Activated CD8-positive, alpha-beta memory T cell treated with anti-CD3 and anti-CD28 coated beads, Interleukin-2, amount 10 ng/mL, durations not matched to agents 7 days and 5 days (primary cell): ENCODE measurements at regions of chr16 and their contacts with region 1.

Region 1: DNA sequence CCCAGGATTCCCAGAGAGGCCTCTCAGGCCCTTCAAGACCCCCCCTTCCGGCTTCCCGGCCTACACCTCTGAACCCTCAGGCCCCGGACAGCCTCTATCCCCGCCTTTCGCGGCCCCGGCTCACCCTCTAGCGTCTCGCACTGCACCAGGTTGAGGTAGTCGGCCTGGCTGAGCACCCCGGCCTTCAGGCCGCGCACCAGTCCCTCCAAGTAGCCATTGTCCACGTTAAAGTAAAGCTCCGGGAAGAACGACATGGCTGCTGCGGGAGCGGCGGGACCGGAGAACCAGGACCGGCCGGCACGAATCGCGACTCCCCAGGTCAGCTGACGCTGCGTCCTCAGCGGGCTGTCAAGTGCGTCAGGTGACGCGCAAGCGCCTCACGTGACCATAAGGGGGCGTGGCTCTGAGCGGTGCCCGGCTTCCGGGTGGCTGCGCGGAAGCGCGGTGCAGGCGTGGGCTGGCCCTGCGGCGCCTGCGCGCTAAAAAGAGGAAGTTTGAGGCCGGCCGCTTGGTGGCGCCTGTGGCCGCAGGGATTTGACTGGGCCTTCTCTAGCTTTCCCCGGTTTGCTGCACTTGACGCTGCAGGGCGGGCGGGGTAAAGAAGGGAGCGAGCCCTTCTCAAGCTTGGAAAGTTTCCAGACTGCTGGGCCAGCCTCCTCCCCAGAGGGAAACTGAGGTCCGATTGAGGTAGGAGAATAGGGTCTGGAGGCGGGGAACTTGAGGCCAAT is at the start of gene ATP6V0D1:
- DNase-seq: peak; percentile 99
- ATAC-seq: peak; percentile 88
- H3K4me3 Mint-ChIP-seq: peak within 1 kb of the TSS; percentile 99
- H3K27ac Mint-ChIP-seq: peak within 1 kb of the TSS; percentile 99
- H3K4me1 Mint-ChIP-seq: peaks cover 31% of the 10 kb centered on the region
- H3K27me3 Mint-ChIP-seq: no peaks in the 10 kb centered on the region
- total RNA-seq, gene ATP6V0D1: 42.1 to 58.3 TPM

Region 2: GRCh38 chr16:67461600-67462592 is 19.1 kb before region 1 on chr16:
- CTCF ChIA-PET with region 1: interaction called, 15 read pairs
- DNase-seq: no peak
- ATAC-seq: no peak
- H3K4me3 Mint-ChIP-seq: no peak overlapping the region
- H3K27ac Mint-ChIP-seq: no peak overlapping the region
- H3K4me1 Mint-ChIP-seq: peaks cover 6% of the 10 kb centered on the region
- H3K27me3 Mint-ChIP-seq: no peaks in the 10 kb centered on the region

Region 3: GRCh38 chr16:67504041-67505021 is 23.3 kb after region 1 on chr16:
- CTCF ChIA-PET with region 1: interaction called, 19 read pairs
- DNase-seq: peak; percentile 89
- ATAC-seq: peak; percentile 98
- H3K4me3 Mint-ChIP-seq: no peak overlapping the region
- H3K27ac Mint-ChIP-seq: peak overlapping the region; percentile 83
- H3K4me1 Mint-ChIP-seq: peaks cover 42% of the 10 kb centered on the region
- H3K27me3 Mint-ChIP-seq: no peaks in the 10 kb centered on the region

Region 4: DNA sequence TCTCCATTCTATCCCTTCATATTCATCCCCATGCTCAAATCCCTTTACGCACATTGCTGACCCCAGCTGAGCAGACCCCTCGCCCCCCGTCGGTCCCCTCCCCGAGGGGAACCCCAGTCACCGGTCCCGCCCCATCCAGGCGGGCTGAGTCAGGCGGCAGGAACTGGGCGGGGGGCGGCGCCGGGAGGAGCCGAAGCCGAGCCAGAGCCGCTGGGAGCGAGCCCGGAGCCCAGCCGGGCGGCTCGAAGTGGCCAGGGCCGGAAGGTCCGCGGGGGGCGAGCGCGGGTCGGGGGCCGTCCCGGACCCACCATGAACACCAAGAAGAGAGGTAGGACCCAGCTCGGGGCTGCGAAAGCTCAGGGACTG is 56.3 kb after region 1 on chr16:
- CTCF ChIA-PET with region 1: interaction called, 10 read pairs
- DNase-seq: peak; percentile 59
- ATAC-seq: peak; percentile 52
- H3K4me3 Mint-ChIP-seq: peak overlapping the region; percentile 76
- H3K27ac Mint-ChIP-seq: peak overlapping the region; percentile 42
- H3K4me1 Mint-ChIP-seq: peaks cover 19% of the 10 kb centered on the region
- H3K27me3 Mint-ChIP-seq: peaks cover 34% of the 10 kb centered on the region

Region 5: GRCh38 chr16:67667817-67668494 is 187.0 kb after region 1 on chr16:
- CTCF ChIA-PET with region 1: interaction called, 11 read pairs
- DNase-seq: peak; percentile 90
- ATAC-seq: peak; percentile 81
- H3K4me3 Mint-ChIP-seq: no peak overlapping the region
- H3K27ac Mint-ChIP-seq: no peak overlapping the region
- H3K4me1 Mint-ChIP-seq: peaks cover 12% of the 10 kb centered on the region
- H3K27me3 Mint-ChIP-seq: no peaks in the 10 kb centered on the region